Aorta (tissue), 5 donors: ENCODE measurements at regions of chr3 and their contacts with region 1.

Region 1: DNA sequence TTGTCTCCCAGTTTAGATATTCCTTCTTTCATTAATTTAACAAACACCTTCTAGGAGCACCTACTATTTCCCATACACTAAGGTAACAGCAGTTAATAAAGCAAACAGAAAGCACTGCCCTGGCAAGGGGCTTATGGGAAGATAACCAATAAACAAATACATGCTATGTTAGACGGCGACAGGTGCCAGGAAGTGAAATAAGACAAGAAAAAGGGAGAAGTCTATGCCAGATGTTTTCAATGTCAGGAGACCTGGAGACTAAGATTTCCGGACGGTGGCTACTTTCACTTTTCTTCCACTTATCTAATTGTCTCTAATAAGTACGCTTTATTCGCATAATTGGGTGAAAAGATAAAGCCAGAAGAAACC is 32.5 kb upstream of the ZNF445 start:
- DNase-seq: no peak
- ATAC-seq: no peak
- H3K4me3 ChIP-seq: peak overlapping the region; percentile 86 to 100
- H3K27ac ChIP-seq: peak overlapping the region in 1 of 2 donors; percentile 79
- H3K4me1 ChIP-seq: no peaks in the 10 kb centered on the region
- H3K27me3 ChIP-seq: no peaks in the 10 kb centered on the region

Region 2: DNA sequence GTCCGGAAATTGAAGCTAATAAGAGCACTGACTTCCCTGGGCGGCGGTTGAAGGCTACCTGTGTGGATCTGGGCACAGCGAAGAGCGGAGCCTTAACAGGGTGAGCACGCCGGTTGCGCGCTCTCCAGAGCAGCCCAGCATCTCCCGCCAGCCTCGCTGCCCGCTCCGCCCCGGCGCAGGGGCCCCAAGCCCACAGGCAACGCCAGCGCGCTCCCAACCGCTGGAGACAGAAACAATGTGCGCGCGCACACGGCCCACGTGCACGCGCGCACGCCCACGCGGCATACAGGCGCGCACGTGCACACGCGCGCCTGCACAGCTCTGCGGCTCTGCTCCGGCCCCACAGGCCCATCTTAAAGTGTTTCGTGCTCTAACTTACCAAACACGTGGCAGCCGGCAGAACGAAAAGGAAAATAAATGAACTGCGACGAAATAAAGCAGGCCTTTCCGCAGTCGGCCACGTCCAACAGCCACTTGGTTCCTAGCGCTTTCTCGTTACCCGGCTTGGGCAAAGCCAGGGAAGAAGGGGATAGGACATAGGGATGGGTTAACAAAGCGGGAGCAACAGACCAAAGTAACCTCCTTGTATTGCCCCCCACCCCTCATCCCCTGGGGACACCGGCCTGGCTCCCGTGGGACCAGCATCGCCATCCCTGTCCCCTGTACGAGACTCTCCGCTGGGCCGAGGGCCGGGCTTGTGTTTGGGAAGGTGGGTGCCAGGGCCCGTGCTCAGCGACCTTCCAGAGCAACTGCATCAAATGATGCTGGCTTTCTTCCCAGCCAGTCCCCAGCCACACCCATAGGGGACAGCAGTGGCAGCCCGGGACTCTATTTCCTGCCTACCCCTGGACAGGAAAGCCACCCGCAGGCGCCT is 615.6 kb before region 1 on chr3:
- intact Hi-C with region 1: no loop called
- DNase-seq: peak; percentile 69 to 92
- ATAC-seq: peak; percentile 91
- H3K4me3 ChIP-seq: peak overlapping the region; percentile 21 to 54
- H3K27ac ChIP-seq: peak overlapping the region in 1 of 2 donors; percentile 31
- H3K4me1 ChIP-seq: no peaks in the 10 kb centered on the region
- H3K27me3 ChIP-seq: no peaks in the 10 kb centered on the region

Region 3: GRCh38 chr3:44363591-44363990 is 146.4 kb before region 1 on chr3:
- intact Hi-C with region 1: no loop called
- DNase-seq: no peak
- ATAC-seq: no peak
- H3K4me3 ChIP-seq: no peak overlapping the region
- H3K27ac ChIP-seq: no peak overlapping the region
- H3K4me1 ChIP-seq: no peaks in the 10 kb centered on the region
- H3K27me3 ChIP-seq: no peaks in the 10 kb centered on the region

Region 4: GRCh38 chr3:44418549-44418948 is 91.4 kb before region 1 on chr3:
- intact Hi-C with region 1: no loop called
- DNase-seq: no peak
- ATAC-seq: no peak
- H3K4me3 ChIP-seq: no peak overlapping the region
- H3K27ac ChIP-seq: no peak overlapping the region
- H3K4me1 ChIP-seq: no peaks in the 10 kb centered on the region
- H3K27me3 ChIP-seq: no peaks in the 10 kb centered on the region

Region 5: DNA sequence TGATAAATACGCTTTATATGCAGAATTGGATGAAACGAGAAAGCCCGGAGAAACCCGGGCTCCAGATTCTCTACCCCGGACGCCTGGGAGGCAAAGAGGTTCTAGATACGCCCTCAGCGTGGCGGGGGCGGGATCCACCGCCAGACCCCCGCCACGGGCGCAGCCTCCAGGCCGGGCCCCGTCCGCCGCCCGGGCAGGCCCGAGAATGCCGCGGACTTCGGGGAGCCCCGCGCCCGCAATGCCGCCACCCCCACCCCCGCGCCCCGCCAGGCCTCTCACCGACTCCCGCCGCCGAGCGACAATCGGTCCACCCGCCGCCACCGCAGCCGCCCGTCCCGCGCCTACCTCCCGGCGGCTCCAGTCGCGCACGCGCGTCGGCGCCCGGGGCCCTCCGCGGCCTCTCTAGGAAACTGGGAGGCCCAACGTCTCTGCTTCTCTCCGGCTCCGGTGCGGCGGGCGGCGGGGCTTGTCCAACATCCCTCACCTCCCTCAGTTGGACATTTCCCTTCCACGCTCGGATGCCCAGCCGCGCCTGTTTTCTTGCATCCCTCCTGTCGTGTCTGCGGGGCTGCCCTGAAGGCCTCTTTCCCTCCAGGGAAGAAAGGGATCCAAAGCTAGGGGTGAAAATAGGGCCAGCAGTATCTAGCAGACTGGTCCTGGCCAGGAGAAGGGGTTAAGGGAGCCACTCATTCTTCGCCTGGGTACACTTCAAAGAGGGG is 32.5 kb before region 1 on chr3 and contains the start of gene ZNF445:
- intact Hi-C with region 1: loop called in 1 of 2 experiments (anchors 5 kb)
- DNase-seq: peak; percentile 87 to 94
- ATAC-seq: peak; percentile 96
- H3K4me3 ChIP-seq: peak within 1 kb of the TSS; percentile 84 to 100
- H3K27ac ChIP-seq: no peak within 1 kb of the TSS
- H3K4me1 ChIP-seq: peaks cover 0 to 6% of the 10 kb centered on the region in 2 donors
- H3K27me3 ChIP-seq: no peaks in the 10 kb centered on the region
- total RNA-seq, gene ZNF445: 18.6 to 26.4 TPM

Region 6: GRCh38 chr3:44554626-44555592 is 44.9 kb after region 1 on chr3 and contains the start of gene ZKSCAN7:
- intact Hi-C with region 1: loop called in 1 of 2 experiments (anchors 2 kb)
- DNase-seq: peak; percentile 77 to 87
- ATAC-seq: peak; percentile 87
- H3K4me3 ChIP-seq: peak within 1 kb of the TSS; percentile 42 to 86
- H3K27ac ChIP-seq: peak within 1 kb of the TSS in 1 of 2 donors; percentile 65
- H3K4me1 ChIP-seq: peaks cover 0 to 2% of the 10 kb centered on the region in 2 donors
- H3K27me3 ChIP-seq: no peaks in the 10 kb centered on the region
- total RNA-seq, gene ZKSCAN7: 3.5 to 6.2 TPM

Region 7: GRCh38 chr3:44782891-44783290 is 272.9 kb after region 1 on chr3:
- intact Hi-C with region 1: no loop called
- DNase-seq: no peak
- ATAC-seq: no peak
- H3K4me3 ChIP-seq: no peak overlapping the region
- H3K27ac ChIP-seq: no peak overlapping the region
- H3K4me1 ChIP-seq: no peaks in the 10 kb centered on the region
- H3K27me3 ChIP-seq: no peaks in the 10 kb centered on the region